GM12878 (cell line): ENCODE measurements at regions of chr5 and their contacts with region 1.

Region 1: GRCh38 chr5:132180134-132180745 is 47.4 kb downstream of the P4HA2 start:
- DNase-seq: no peak
- ATAC-seq: peak; percentile 63
- H3K4me3 ChIP-seq: no peak overlapping the region
- H3K27ac ChIP-seq: no peak overlapping the region
- H3K4me1 ChIP-seq: peaks cover 11% of the 10 kb centered on the region
- H3K27me3 ChIP-seq: no peaks in the 10 kb centered on the region
- CTCF ChIP-seq: peak; percentile 66 to 69 (median 69)
- EP300 ChIP-seq: no peak
- POLR2A ChIP-seq: no peak
- RAD21 ChIP-seq: peak; percentile 84

Region 2: GRCh38 chr5:132103332-132103951 is 76.8 kb before region 1 on chr5:
- CTCF ChIA-PET with region 1: interaction called, 3 read pairs
- POLR2A ChIA-PET with region 1: no interaction called
- RAD21 ChIA-PET with region 1: interaction called, 3 read pairs
- SMC1A ChIA-PET with region 1: interaction called, 7 read pairs
- in situ Hi-C with region 1: no loop called
- intact Hi-C with region 1: loop called (anchors 1 kb)
- DNase-seq: peak; percentile 78
- ATAC-seq: peak; percentile 76
- H3K4me3 ChIP-seq: 0 out of 2 replicates have a peak overlapping the region, but pooled peaks have one; percentile 14
- H3K27ac ChIP-seq: peak overlapping the region; percentile 98
- H3K4me1 ChIP-seq: peaks cover 67% of the 10 kb centered on the region
- H3K27me3 ChIP-seq: no peaks in the 10 kb centered on the region
- CTCF ChIP-seq: peak in 2 of 3 experiments; percentile 16 to 28; a peak in 2 of 6 replicates
- EP300 ChIP-seq: peak; percentile 38 to 65; a peak in 2 of 4 replicates
- POLR2A ChIP-seq: peak; percentile 60; the same call in 1 of the 2 replicates
- RAD21 ChIP-seq: peak; percentile 39; the same call in 1 of the 2 replicates

Region 3: DNA sequence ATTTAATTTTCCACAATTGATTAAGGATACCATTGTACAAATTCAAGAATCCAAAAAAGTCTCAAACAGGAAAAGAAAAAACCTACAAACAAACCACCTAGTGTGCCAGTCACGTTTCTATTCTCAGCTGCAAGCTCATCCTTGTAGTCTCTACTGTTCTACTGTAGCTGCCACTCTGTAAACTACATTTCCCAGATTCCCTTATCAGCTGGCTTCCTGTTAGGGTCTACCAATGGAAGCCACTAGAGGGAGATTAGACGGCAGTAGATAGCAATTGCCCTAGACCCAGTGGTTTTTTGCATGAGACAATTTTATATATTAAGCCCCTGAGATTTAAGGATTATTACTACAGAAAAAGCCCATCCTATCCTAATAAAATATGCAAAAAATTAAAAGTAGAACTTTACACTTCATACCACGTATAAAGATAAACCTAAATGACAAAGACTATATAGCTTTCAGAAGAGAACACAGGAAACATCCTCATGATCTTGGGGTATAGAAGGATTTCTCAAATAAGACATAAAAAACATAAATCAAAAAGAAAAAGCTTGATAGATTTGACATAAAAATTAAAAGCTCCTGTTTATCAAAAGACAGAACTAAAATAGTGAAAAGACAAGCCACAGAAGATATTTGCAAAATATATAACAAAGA is 10.0 kb after region 1 on chr5:
- CTCF ChIA-PET with region 1: interaction called, 29 read pairs
- POLR2A ChIA-PET with region 1: interaction called, 8 read pairs
- RAD21 ChIA-PET with region 1: interaction called, 10 read pairs
- SMC1A ChIA-PET with region 1: interaction called, 11 read pairs
- in situ Hi-C with region 1: no loop called
- intact Hi-C with region 1: no loop called
- DNase-seq: no peak
- ATAC-seq: peak; percentile 100
- H3K4me3 ChIP-seq: no peak overlapping the region
- H3K27ac ChIP-seq: no peak overlapping the region
- H3K4me1 ChIP-seq: no peaks in the 10 kb centered on the region
- H3K27me3 ChIP-seq: no peaks in the 10 kb centered on the region
- CTCF ChIP-seq: peak; percentile 64 to 69 (median 65)
- EP300 ChIP-seq: no peak
- POLR2A ChIP-seq: no peak
- RAD21 ChIP-seq: peak; percentile 68

Region 4: GRCh38 chr5:132215329-132215728 is 35.1 kb after region 1 on chr5:
- CTCF ChIA-PET with region 1: interaction called, 10 read pairs
- POLR2A ChIA-PET with region 1: no interaction called
- RAD21 ChIA-PET with region 1: interaction called, 3 read pairs
- SMC1A ChIA-PET with region 1: no interaction called
- in situ Hi-C with region 1: no loop called
- intact Hi-C with region 1: no loop called
- DNase-seq: no peak
- ATAC-seq: no peak
- H3K4me3 ChIP-seq: no peak overlapping the region
- H3K27ac ChIP-seq: no peak overlapping the region
- H3K4me1 ChIP-seq: no peaks in the 10 kb centered on the region
- H3K27me3 ChIP-seq: no peaks in the 10 kb centered on the region; a peak in 1 of 4 replicates
- CTCF ChIP-seq: no peak
- EP300 ChIP-seq: no peak
- POLR2A ChIP-seq: no peak
- RAD21 ChIP-seq: no peak

Region 5: DNA sequence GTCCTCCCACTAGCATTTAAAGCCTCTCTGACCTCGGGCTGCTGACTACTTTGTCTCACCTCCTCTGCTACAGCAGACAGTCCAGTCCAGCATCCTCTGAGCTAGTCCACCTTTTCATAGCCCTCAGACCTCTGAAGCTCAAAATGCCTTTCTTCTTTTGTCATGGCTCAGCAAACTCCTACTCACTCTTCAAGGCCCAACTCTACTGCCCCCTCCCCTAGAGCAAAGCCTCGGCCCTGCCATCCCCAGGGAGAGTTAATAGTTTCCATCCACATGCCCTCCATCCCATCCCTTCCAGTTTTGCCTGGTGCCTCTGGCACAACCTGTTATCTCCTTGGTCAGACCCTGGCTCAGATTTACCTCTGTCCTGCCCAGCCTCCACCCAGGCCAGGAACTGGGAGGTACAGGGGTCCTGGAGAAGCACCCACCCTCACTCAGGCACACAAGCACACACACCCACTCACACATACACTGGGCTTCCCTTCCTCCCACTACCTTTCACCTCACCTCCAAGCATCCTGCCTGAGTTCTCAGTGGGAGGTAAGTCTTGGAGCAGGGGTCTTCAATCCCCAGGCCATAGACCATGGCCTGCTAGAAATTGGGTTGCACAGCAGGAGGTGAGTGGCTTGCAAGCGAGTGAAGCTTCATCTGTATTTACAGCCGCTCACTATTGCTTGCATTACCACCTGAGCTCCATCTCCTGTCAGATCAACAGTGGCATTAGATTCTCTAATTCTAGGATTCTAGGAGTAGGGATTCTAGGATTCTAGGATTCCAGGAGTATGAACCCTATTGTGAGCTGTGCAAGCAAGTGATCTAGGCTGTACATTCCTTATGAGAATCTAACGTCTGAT is 95.4 kb after region 1 on chr5:
- CTCF ChIA-PET with region 1: no interaction called
- POLR2A ChIA-PET with region 1: no interaction called
- RAD21 ChIA-PET with region 1: no interaction called
- SMC1A ChIA-PET with region 1: no interaction called
- in situ Hi-C with region 1: no loop called
- intact Hi-C with region 1: no loop called
- DNase-seq: no peak
- ATAC-seq: no peak
- H3K4me3 ChIP-seq: no peak overlapping the region
- H3K27ac ChIP-seq: no peak overlapping the region
- H3K4me1 ChIP-seq: no peaks in the 10 kb centered on the region
- H3K27me3 ChIP-seq: no peaks in the 10 kb centered on the region; a peak in 1 of 4 replicates
- CTCF ChIP-seq: no peak
- EP300 ChIP-seq: no peak
- POLR2A ChIP-seq: no peak
- RAD21 ChIP-seq: no peak

Region 6: DNA sequence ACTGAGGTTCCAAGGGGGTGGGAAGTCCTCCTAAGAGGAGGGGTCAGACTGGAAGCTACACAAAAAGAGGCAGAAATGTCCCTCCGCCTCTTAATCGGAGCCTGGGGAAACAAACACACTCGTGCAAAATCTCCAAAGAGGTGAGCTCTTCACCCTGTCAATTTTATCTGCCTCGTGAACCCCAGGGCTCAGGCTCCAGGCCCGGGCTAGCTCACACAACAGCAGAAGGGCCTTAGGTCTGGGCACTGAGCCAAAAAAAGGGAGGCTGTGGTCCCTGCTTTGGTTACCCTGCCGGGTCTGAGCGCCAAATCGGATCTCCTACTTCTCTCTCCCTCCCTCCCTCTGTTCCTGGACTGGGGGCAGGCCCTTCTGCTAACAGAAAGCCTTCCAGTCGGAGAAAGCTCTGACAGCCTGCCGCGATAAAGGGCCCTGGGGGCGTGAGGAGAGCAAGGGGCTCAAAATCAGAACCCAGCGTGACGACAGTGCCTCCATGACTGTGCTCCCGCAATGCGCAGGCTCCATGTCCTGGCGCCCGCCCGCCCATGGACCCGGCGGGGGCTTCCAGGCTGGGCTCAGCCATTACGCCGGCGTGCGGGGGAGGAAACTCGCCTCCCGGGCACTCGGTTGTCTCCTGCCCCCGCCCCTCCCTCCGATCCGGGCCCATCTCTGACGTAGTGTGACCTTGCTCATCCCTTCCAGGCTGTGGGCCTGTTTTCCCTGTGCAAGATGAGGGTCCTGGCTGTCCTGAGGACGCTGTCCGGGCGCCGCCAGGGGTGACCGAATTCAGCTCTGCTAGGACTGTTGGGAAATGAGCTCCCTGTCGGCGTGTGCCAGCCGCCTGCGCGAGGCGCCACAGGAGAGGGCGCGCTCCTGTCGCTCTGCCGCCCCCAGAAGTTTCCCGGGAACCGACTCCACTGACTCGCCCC is 113.1 kb after region 1 on chr5:
- CTCF ChIA-PET with region 1: interaction called, 5 read pairs
- POLR2A ChIA-PET with region 1: no interaction called
- RAD21 ChIA-PET with region 1: interaction called, 12 read pairs
- SMC1A ChIA-PET with region 1: interaction called, 6 read pairs
- in situ Hi-C with region 1: no loop called
- intact Hi-C with region 1: no loop called
- DNase-seq: no peak
- ATAC-seq: peak; percentile 67
- H3K4me3 ChIP-seq: peak overlapping the region; percentile 70
- H3K27ac ChIP-seq: no peak overlapping the region
- H3K4me1 ChIP-seq: peaks cover 21% of the 10 kb centered on the region
- H3K27me3 ChIP-seq: peaks cover 5 to 25% of the 10 kb centered on the region in 2 experiments; a peak in 3 of 4 replicates
- CTCF ChIP-seq: peak in 2 of 3 experiments; percentile 10 to 18; a peak in 2 of 6 replicates
- EP300 ChIP-seq: no peak
- POLR2A ChIP-seq: peak; percentile 60; the same call in 1 of the 2 replicates
- RAD21 ChIP-seq: no peak

Region 7: DNA sequence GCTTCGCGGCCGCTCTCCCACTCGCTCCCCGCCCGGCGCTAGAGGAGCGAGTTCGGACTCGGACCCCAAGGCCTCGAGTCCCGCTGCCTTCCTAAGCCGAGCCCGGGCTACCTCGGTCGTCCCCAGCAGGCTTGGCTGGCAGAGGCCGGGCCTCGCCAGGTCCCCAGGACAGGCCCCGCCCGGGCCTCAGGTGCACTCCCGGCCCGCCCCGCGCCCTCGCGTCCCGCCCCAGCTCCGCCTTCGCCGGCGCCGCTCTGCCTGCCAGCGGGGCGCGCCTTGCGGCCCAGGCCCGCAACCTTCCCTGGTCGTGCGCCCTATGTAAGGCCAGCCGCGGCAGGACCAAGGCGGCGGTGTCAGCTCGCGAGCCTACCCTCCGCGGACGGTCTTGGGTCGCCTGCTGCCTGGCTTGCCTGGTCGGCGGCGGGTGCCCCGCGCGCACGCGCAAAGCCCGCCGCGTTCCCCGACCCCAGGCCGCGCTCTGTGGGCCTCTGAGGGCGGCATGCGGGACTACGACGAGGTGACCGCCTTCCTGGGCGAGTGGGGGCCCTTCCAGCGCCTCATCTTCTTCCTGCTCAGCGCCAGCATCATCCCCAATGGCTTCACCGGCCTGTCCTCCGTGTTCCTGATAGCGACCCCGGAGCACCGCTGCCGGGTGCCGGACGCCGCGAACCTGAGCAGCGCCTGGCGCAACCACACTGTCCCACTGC is 189.4 kb after region 1 on chr5 and contains the start of gene SLC22A5:
- CTCF ChIA-PET with region 1: interaction called, 12 read pairs
- POLR2A ChIA-PET with region 1: no interaction called
- RAD21 ChIA-PET with region 1: interaction called, 11 read pairs
- SMC1A ChIA-PET with region 1: interaction called, 4 read pairs
- in situ Hi-C with region 1: no loop called
- intact Hi-C with region 1: no loop called
- DNase-seq: no peak
- ATAC-seq: peak; percentile 97
- H3K4me3 ChIP-seq: peak within 1 kb of the TSS; percentile 84
- H3K27ac ChIP-seq: peak within 1 kb of the TSS; percentile 31; the same call in 1 of the 2 replicates
- H3K4me1 ChIP-seq: peaks cover 8% of the 10 kb centered on the region
- H3K27me3 ChIP-seq: no peaks in the 10 kb centered on the region; a peak in 2 of 4 replicates
- CTCF ChIP-seq: no peak
- EP300 ChIP-seq: no peak
- POLR2A ChIP-seq: peak; percentile 71
- RAD21 ChIP-seq: no peak
- polyA plus RNA-seq, gene SLC22A5: 1.1 to 1.9 TPM

Region 8: GRCh38 chr5:132378580-132378979 is 198.3 kb after region 1 on chr5:
- CTCF ChIA-PET with region 1: interaction called, 10 read pairs
- POLR2A ChIA-PET with region 1: no interaction called
- RAD21 ChIA-PET with region 1: no interaction called
- SMC1A ChIA-PET with region 1: interaction called, 5 read pairs
- in situ Hi-C with region 1: no loop called
- intact Hi-C with region 1: no loop called
- DNase-seq: no peak
- ATAC-seq: peak; percentile 71
- H3K4me3 ChIP-seq: no peak overlapping the region
- H3K27ac ChIP-seq: no peak overlapping the region
- H3K4me1 ChIP-seq: no peaks in the 10 kb centered on the region
- H3K27me3 ChIP-seq: no peaks in the 10 kb centered on the region
- CTCF ChIP-seq: no peak
- EP300 ChIP-seq: no peak
- POLR2A ChIP-seq: no peak
- RAD21 ChIP-seq: no peak

Region 9: DNA sequence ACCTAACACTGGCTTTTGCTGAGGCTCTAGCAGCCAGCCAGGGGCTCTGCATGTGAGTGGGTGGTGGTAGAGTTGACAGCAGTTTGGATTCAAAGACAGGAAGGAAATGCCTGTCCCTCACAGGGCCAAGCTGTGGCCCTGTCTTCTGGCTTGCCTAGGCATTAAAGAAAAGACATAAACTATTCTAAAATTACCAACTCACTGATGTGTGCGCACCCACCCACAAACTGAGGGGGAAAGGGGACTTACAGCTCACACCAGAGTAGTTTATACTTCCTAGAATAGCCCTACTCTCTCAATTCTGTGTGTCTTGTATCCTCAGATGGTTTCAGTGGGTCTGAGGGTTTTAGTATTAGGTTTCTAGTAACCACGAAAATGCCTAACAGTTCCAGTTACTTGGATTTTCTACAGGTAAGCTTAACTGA is 459.5 kb after region 1 on chr5:
- CTCF ChIA-PET with region 1: no interaction called
- POLR2A ChIA-PET with region 1: no interaction called
- RAD21 ChIA-PET with region 1: no interaction called
- SMC1A ChIA-PET with region 1: no interaction called
- in situ Hi-C with region 1: no loop called
- intact Hi-C with region 1: no loop called
- DNase-seq: peak; percentile 82
- ATAC-seq: peak; percentile 78
- H3K4me3 ChIP-seq: no peak overlapping the region
- H3K27ac ChIP-seq: peak overlapping the region; percentile 28
- H3K4me1 ChIP-seq: peaks cover 59% of the 10 kb centered on the region
- H3K27me3 ChIP-seq: no peaks in the 10 kb centered on the region
- CTCF ChIP-seq: no peak
- EP300 ChIP-seq: peak in 1 of 2 experiments; percentile 70; a peak in 2 of 4 replicates
- POLR2A ChIP-seq: no peak
- RAD21 ChIP-seq: no peak